ENCODE measurements at regions of chr2 and their contacts with region 1.

Region 1: DNA sequence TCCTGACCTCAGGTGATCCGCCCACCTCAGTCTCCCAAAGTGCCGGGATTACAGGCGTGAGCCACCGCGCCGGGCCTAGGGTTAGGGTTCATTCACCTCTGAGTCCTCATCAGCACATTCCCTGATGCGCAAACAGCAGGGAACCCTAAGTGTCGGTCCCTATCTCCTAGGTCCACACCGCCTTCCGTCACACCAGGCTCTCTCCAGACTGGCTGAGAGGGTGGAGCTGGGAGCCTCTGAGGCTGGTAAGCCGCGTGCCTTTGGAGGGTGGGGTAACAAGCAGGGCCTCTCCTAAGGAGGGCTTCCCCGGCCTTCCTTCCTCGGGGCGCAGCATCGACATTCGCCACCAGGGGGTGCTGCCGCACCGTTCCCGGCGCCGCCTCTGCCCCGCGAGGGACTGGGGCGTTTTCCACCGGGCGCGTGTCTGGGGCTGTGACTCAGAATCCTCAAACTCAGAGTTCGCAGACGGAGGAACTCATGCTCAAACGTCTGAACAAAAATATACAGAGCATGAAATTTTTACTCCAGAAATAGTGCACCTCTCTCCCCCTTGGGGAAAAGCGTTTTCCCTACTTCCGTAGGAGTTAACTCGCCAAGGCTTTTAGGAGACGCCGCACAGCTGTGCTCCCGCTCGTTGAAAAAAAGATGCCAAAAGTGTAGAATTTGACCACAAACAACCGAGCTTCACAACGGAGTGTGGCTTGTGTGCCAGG is 63.9 kb upstream of the ASAP2 start:
- DNase-seq: peak; percentile 85
- H3K4me3 ChIP-seq: peak overlapping the region in 2 of 3 experiments; percentile 10 to 19
- H3K27ac ChIP-seq: peak overlapping the region; percentile 48
- H3K4me1 ChIP-seq: peaks cover 7% of the 10 kb centered on the region
- H3K27me3 ChIP-seq: no peaks in the 10 kb centered on the region
- CTCF ChIP-seq: peak; percentile 74 to 98

Region 2: GRCh38 chr2:9003616-9004337 is 138.9 kb before region 1 on chr2 and contains the start of gene MBOAT2:
- CTCF ChIA-PET with region 1: no interaction called
- dilution Hi-C with region 1: no loop called
- in situ Hi-C with region 1: no loop called
- intact Hi-C with region 1: loop called (anchors 5 kb)
- DNase-seq: peak; percentile 84
- H3K4me3 ChIP-seq: peak within 1 kb of the TSS; percentile 82 to 95 (median 85)
- H3K27ac ChIP-seq: peak within 1 kb of the TSS; percentile 74
- H3K4me1 ChIP-seq: peaks cover 40% of the 10 kb centered on the region
- H3K27me3 ChIP-seq: no peaks in the 10 kb centered on the region
- CTCF ChIP-seq: no peak
- total RNA-seq, gene MBOAT2: 14.8 to 103 TPM

Region 3: DNA sequence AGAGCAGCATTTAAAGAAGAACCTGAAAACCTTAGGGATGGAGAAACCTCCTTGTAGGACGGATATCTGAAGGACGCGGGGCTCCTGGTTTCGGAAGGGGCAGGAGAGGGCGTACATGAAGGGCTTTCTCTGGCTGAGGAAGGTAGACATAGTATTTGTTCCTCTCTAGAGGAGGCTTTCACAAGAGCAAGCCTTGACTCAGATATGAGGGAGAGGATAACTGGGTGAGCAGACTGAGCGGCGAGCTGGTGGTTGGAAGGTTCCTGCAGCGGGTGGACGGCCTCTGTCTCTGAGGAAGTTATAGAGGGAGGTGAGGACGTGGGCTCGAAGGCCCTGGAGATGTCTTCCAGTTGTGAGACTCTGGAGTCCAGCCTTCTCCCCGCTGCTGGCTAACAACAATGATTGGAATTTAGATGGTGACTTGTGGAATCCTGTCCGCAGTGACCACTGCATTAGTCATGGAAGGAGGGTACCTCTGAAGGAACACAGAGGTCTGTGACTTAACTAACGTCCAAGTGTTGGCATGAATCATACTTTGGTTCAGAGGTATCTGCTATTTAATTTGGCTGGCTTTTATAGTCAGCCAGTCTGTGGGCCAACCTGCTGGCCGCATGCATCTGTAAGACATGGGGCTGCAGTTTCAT is 144.8 kb after region 1 on chr2:
- CTCF ChIA-PET with region 1: no interaction called
- dilution Hi-C with region 1: no loop called
- in situ Hi-C with region 1: no loop called
- intact Hi-C with region 1: loop called (anchors 1 kb)
- DNase-seq: peak; percentile 99
- H3K4me3 ChIP-seq: no peak overlapping the region
- H3K27ac ChIP-seq: peak overlapping the region; percentile 94
- H3K4me1 ChIP-seq: peaks cover 56% of the 10 kb centered on the region
- H3K27me3 ChIP-seq: no peaks in the 10 kb centered on the region
- CTCF ChIP-seq: no peak

Region 4: DNA sequence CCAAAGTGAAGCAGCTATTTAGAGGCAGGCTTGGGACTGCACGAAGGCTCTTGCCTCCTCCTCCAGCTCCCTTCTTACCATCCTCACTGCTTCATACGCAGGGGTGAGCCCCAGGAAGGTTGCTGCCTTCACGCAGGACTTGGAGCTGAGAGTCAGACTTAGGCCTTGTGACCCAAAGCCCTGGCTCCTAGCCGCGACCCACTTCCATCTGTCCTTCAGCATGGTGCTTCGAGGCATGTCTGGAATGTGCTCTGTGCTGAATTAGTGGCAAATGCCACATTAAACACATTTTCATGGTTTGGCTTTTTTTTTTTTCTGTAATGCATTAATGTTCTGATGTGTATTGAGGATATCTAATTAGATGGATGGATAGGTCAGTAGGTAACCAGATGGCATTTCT is 243.1 kb after region 1 on chr2:
- CTCF ChIA-PET with region 1: no interaction called
- dilution Hi-C with region 1: no loop called
- in situ Hi-C with region 1: no loop called
- intact Hi-C with region 1: loop called (anchors 2 kb)
- DNase-seq: no peak
- H3K4me3 ChIP-seq: no peak overlapping the region
- H3K27ac ChIP-seq: peak overlapping the region; percentile 12
- H3K4me1 ChIP-seq: peaks cover 30% of the 10 kb centered on the region
- H3K27me3 ChIP-seq: no peaks in the 10 kb centered on the region
- CTCF ChIP-seq: no peak

Region 5: DNA sequence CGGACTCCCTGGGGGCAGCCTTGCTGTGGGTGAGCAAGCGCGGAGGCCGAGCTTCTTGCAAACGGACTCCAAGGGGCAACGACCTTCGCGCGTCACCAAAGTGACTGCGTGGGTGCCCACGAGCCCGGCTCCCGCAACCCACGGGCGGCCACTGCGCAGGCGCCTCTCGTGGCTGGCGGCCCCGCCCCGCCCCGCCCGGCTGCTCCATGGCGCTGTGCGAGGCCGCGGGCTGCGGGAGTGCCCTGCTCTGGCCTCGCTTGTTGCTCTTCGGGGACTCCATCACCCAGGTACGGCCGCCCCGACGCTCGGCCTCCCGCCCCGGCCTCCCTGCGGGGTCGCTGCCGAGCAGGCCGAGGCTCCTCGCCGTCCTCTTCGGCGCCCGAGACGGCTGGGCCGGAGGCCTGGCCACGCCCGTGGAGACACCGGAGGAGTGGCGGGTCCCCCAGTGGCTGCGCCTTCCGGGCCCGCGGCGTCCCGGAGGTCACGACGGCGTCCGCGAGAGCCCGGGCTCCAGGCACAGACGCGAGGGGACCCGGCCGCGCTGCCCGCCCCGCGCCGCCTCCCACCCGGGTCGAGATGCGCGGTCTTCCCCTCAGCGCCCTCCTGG is 331.8 kb after region 1 on chr2 and contains the start of gene IAH1:
- CTCF ChIA-PET with region 1: no interaction called
- dilution Hi-C with region 1: no loop called
- in situ Hi-C with region 1: no loop called
- intact Hi-C with region 1: loop called (anchors 10 kb)
- DNase-seq: peak; percentile 49
- H3K4me3 ChIP-seq: peak within 1 kb of the TSS; percentile 42 to 66 (median 65)
- H3K27ac ChIP-seq: peak within 1 kb of the TSS; percentile 54
- H3K4me1 ChIP-seq: peaks cover 11% of the 10 kb centered on the region
- H3K27me3 ChIP-seq: no peaks in the 10 kb centered on the region
- CTCF ChIP-seq: no peak
- total RNA-seq, gene IAH1: 26.3 to 53.1 TPM

Region 6: GRCh38 chr2:9739531-9739964 is 596.8 kb after region 1 on chr2:
- CTCF ChIA-PET with region 1: no interaction called
- dilution Hi-C with region 1: no loop called
- in situ Hi-C with region 1: no loop called
- intact Hi-C with region 1: no loop called
- DNase-seq: no peak
- H3K4me3 ChIP-seq: no peak overlapping the region
- H3K27ac ChIP-seq: no peak overlapping the region
- H3K4me1 ChIP-seq: peaks cover 24% of the 10 kb centered on the region
- H3K27me3 ChIP-seq: no peaks in the 10 kb centered on the region
- CTCF ChIP-seq: no peak

Measured in mammary epithelial cell (primary cell).